ENCODE measurements at regions of chr1 and their contacts with region 1.

Region 1: GRCh38 chr1:202861420-202862200 is 27.3 kb downstream of the RABIF start:
- DNase-seq: peak; percentile 91
- CTCF ChIP-seq: no peak

Region 2: GRCh38 chr1:202733251-202733650 is 128.4 kb before region 1 on chr1:
- in situ Hi-C with region 1: no loop called
- DNase-seq: no peak
- CTCF ChIP-seq: no peak

Region 3: DNA sequence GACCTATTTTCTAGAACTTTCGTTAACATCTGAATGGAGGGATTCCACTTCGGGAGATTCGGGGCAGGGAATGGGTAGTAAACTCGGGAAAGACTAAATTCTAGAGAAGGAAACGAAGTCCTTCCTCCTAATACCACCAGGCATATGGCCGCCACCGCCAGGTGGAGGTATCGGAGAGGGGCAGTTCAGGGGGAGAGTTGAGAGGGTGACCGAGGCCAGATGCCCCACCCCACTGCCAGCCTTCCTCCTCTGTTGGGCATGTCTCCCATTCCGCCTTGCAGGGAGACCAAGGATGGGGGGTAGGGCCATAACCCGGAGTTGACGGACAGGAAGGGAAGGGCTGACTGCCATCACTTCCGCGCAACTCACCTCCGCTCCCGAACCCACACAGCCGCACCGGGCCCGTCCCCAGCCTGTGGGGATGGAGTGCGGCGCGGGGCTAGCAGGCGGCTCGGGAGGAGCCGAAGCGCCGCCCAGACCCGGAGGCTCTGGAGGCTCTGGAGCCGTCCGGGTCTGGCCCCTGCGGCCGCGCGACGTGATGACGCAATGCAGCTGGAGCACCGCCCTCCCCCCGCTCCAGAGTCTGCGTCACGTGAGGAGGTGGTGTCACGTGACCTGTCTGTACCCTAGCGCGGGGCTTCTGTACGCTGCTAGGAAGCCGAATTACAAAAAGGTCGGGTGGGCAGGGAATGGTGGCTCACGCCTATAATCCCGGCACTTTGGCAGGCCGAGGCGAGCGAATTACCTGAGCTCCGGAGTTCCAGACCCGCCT is 65.3 kb after region 1 on chr1 and contains the start of gene KLHL12:
- in situ Hi-C with region 1: loop called (anchors 10 kb)
- DNase-seq: peak; percentile 96
- CTCF ChIP-seq: peak; percentile 47

Measured in GM13977 (cell line).